ENCODE measurements at regions of chr7 and their contacts with region 1.

Region 1: DNA sequence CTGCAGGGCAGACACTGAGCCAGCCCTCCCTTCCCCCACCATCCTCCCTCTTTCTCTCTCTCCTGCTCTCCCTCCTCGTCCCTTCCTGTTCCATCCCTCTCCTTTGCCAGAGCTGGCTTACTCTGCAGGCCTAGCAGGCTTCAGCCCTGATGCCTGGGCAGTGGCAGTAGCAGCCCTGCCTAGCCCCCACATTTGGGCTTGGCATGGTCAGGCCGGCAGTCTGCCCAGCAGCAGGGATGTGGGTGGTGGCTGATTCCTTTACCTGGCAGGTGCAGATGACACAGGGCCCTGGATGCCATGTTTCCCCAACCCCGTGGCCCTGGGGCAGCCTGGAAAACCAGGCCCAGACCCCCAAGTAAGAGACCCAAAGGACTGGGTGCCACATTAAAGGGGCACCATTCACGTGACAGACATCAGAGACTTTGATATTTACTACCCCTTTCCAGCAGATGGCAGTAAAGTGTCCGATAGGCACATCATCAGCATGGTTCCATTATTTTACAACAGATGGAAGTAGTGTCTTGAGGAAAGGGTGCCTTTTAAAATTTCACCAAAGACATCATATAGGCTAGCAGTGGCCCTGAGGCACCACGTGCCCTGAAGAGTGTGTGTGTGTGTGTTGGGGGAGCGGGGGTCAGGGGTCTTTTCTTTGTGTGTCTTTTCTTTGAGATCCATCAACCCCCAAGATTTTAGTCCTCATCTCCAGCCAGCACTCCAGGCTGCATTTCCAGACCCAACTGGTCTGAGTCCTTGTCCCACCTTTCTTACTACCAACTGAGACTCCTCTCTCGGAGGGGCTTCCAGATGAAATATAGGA is 5.9 kb downstream of the KCP start:
- DNase-seq: no peak
- ATAC-seq: peak; percentile 84
- H3K4me3 ChIP-seq: no peak overlapping the region
- H3K27ac ChIP-seq: no peak overlapping the region
- H3K4me1 ChIP-seq: no peaks in the 10 kb centered on the region
- H3K27me3 ChIP-seq: peaks cover 3 to 62% of the 10 kb centered on the region in 2 donors
- CTCF ChIP-seq: peak; percentile 39 to 56

Region 2: DNA sequence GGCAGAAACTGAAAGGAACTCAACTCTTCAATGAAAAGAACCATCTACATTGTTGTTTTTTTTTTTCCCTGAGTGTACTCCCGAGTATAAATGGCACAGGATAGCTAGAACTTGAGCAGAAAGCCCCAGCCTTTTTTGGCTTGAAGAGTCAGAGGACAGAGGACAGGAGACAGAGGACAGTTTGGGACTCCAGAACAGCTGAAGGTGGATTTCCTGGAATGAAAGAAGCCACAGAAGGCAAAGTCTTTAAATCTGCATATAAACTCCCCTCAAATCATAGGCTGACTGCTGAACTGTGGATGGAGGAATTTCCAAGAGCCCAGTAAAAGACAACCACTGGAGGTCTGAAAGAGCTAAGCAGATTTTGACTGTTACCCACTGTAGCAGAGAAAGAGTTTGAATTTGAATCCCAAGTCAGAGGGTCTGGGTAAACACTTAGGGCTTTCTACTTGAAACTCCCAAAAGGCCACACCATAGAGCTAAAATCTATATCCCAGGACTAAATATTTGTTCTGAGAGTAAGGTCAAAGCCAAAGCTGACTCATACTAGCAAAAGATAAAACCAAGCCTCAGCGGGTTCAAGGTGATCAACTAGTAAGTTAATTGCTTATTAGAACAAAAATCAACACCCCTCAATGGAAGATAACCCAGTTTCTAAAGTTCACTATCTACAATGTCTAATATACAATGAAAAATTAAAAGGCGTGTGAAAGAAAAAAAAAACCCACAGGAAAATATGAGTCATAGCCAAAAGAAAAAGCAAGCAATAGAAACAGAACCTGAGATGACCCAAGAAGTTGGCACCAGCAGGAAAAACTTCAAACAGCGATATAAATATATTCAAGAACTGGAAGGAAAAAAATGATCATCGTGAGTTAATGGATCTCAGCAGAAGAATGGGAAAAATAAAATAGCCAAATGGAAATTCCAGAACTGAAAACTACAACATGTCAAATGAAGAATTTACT is 127.1 kb before region 1 on chr7:
- intact Hi-C with region 1: no loop called
- DNase-seq: no peak
- ATAC-seq: no peak
- H3K4me3 ChIP-seq: no peak overlapping the region
- H3K27ac ChIP-seq: no peak overlapping the region
- H3K4me1 ChIP-seq: no peaks in the 10 kb centered on the region
- H3K27me3 ChIP-seq: no peaks in the 10 kb centered on the region
- CTCF ChIP-seq: no peak

Region 3: GRCh38 chr7:129017933-129018538 is 113.4 kb after region 1 on chr7:
- intact Hi-C with region 1: no loop called
- DNase-seq: no peak
- ATAC-seq: no peak
- H3K4me3 ChIP-seq: no peak overlapping the region
- H3K27ac ChIP-seq: no peak overlapping the region
- H3K4me1 ChIP-seq: peaks cover 0 to 25% of the 10 kb centered on the region in 2 donors
- H3K27me3 ChIP-seq: no peaks in the 10 kb centered on the region
- CTCF ChIP-seq: no peak

Region 4: GRCh38 chr7:129091484-129092002 is 187.0 kb after region 1 on chr7:
- intact Hi-C with region 1: loop called in 1 of 2 experiments (anchors 5 kb)
- DNase-seq: peak; percentile 66 to 93 (median 81)
- ATAC-seq: peak; percentile 96
- H3K4me3 ChIP-seq: no peak overlapping the region
- H3K27ac ChIP-seq: peak overlapping the region in 1 of 2 donors; percentile 13
- H3K4me1 ChIP-seq: peaks cover 0 to 31% of the 10 kb centered on the region in 2 donors
- H3K27me3 ChIP-seq: peaks cover 0 to 18% of the 10 kb centered on the region in 2 donors
- CTCF ChIP-seq: peak; percentile 98

Region 5: GRCh38 chr7:130037703-130038102 is 1133.1 kb after region 1 on chr7:
- intact Hi-C with region 1: no loop called
- DNase-seq: peak in 1 of 4 donors; percentile 5
- ATAC-seq: no peak
- H3K4me3 ChIP-seq: no peak overlapping the region
- H3K27ac ChIP-seq: no peak overlapping the region
- H3K4me1 ChIP-seq: no peaks in the 10 kb centered on the region
- H3K27me3 ChIP-seq: no peaks in the 10 kb centered on the region
- CTCF ChIP-seq: no peak